OCI-LY7 (cell line): ENCODE measurements at regions of chr7 and their contacts with region 1.

Region 1: DNA sequence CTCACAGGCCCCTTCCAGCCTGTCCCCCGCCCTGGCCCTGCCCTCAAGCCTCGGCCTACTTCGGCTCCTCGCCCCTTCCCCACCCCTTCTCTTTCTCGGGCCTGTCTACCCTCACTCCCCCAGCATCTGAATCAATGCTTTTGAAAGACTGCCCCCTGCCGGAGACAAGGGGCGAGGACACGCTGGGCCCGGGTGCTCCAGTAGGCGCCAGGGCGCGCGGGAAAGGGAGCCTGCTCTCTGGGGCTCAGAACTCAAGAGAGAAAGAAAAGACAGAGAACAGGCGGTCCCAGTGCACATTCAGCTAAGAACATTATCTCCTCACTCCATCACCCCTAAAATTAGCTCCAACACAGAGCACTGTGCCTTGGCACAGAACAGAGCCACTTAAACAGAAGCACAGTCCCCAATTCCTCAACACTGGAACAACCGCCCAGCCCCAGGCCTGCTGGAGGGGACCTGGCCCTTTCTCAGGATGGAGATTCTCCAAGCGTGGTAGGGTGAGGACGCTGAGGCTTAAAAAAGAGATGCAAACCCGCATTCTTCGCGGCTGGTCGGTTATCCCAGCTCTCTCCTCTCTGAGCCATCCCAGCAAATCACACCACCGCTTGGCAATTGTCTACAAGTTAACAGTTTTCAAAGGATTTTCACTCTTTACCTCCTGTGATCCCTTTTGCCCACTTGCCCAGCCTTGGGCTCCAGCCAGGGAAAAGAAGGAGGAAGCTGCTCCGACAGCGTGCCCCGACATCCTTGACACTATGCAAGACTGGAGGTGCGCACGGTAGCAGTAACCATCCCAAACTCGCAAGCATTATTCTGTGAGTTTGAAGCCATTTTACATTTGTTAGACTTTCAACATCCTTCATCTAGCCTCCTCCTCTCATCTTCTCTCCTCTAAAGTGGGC is 2.1 kb downstream of the GIGYF1 start:
- DNase-seq: peak; percentile 84
- H3K4me3 ChIP-seq: peak overlapping the region; percentile 95
- H3K27ac ChIP-seq: peak overlapping the region; percentile 42
- H3K4me1 ChIP-seq: peaks cover 42% of the 10 kb centered on the region
- CTCF ChIP-seq: peak; percentile 93

Region 2: GRCh38 chr7:100102950-100103840 is 588.7 kb before region 1 on chr7:
- CTCF ChIA-PET with region 1: no interaction called
- POLR2A ChIA-PET with region 1: no interaction called
- intact Hi-C with region 1: no loop called
- DNase-seq: no peak
- H3K4me3 ChIP-seq: peak overlapping the region; percentile 90
- H3K27ac ChIP-seq: peak overlapping the region; percentile 92
- H3K4me1 ChIP-seq: peaks cover 25% of the 10 kb centered on the region
- CTCF ChIP-seq: no peak

Region 3: DNA sequence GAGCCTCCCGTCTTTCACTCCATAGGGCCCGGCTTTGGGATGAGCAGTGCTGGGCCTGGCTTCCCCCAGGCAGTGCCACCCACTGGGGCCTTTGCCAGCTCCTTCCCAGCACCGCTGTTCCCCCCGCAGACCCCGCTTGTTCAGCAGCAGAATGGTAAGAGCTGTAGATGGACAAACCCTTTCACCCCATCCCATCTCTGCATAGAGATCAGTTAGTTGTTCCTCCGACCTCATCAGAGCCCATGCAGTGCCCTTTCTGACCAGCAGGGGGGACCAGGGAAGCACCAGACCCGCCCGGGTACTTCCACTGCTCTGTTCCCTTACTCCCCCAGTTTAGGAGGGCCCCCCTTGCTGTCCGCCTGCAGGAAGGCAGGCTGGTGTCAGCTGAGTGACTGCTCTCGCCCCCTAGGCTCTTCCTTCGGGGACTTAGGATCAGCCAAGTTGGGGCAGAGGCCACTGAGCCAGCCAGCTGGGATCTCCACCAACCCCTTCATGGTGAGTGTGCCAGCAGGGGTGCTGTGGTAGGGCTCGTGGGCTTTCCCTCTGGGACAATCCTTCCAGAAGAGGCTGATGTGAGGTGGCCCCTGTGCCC is 128.0 kb before region 1 on chr7:
- CTCF ChIA-PET with region 1: no interaction called
- POLR2A ChIA-PET with region 1: no interaction called
- intact Hi-C with region 1: loop called (anchors 1 kb)
- DNase-seq: peak; percentile 75
- H3K4me3 ChIP-seq: no peak overlapping the region
- H3K27ac ChIP-seq: no peak overlapping the region
- H3K4me1 ChIP-seq: peaks cover 27% of the 10 kb centered on the region
- CTCF ChIP-seq: peak; percentile 93

Region 4: GRCh38 chr7:100611974-100612729 is 79.8 kb before region 1 on chr7 and contains the start of gene MOSPD3:
- CTCF ChIA-PET with region 1: interaction called, 4 read pairs
- POLR2A ChIA-PET with region 1: interaction called, 5 read pairs
- intact Hi-C with region 1: loop called (anchors 1 kb)
- DNase-seq: peak; percentile 100
- H3K4me3 ChIP-seq: peak within 1 kb of the TSS; percentile 69
- H3K27ac ChIP-seq: peak within 1 kb of the TSS; percentile 76
- H3K4me1 ChIP-seq: peaks cover 9% of the 10 kb centered on the region
- CTCF ChIP-seq: no peak
- total RNA-seq, gene MOSPD3: 7.1 and 12.0 TPM in 2 replicates

Region 5: DNA sequence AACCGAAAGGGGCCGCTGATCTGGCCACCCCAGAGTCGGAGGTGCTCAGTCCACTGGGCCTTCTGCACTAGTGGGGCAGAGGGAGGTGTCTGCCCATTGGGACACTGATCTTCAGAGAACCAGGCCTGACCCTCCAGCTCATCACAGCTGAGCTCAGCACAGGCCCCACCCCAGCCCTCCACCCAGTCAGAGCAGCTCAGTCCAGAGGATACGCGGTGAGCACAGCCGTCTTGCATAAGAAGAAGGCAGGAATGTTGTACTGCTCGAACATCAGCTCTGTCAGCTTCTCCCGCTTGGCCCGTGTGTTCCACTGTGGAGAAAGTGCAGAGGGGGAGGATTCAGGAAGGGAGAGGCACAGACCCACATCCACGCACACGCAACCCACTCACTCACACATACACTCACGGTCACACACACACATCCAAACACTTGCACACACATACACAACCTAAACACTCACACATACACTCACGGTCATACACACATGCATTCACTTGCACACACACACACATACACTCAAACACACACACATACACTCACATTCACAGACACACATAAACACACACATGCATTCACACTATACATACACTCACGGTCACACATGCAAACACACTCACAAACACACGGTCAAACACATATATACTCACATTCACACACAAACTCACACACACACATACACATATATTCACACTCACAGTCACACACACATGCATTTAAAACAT is 41.9 kb before region 1 on chr7:
- CTCF ChIA-PET with region 1: no interaction called
- POLR2A ChIA-PET with region 1: no interaction called
- intact Hi-C with region 1: no loop called
- DNase-seq: no peak
- H3K4me3 ChIP-seq: no peak overlapping the region
- H3K27ac ChIP-seq: no peak overlapping the region
- H3K4me1 ChIP-seq: no peaks in the 10 kb centered on the region
- CTCF ChIP-seq: no peak

Region 6: DNA sequence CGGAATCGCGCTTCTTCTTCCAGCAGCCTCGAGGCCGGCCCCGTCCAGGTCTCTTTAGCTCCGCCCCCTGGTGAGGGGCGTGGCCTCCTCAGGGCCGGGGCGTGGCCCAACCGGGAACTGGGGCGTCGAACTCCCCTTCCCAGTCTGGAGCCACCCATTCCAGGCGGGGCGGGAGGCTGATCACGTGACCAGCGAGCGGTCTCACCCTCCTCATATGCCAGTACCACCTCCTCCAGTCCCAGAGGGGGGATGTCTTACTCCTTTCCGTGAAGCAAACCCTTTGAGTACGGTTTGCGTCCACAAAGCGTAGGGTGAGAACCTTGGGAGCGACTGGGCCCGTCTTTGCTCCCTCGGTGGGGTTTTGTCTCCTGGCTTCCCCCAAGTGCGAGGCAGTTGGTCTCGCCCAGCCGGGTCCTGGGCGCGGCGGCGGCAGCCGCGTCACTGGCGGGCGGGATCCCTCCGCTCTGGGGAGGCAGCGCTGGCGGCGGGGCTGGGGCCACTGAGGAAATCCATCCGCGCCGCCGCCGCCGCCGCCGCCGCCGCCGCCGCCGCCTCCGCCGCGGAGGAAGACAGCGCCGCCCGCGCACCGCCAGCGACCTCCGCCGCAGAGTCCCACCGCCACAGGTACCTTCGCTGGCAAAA is 18.5 kb before region 1 on chr7 and contains the start of gene GNB2:
- CTCF ChIA-PET with region 1: interaction called, 4 read pairs
- POLR2A ChIA-PET with region 1: no interaction called
- intact Hi-C with region 1: loop called (anchors 1 kb)
- DNase-seq: peak; percentile 98
- H3K4me3 ChIP-seq: peak within 1 kb of the TSS; percentile 99
- H3K27ac ChIP-seq: peak within 1 kb of the TSS; percentile 64
- H3K4me1 ChIP-seq: peaks cover 9% of the 10 kb centered on the region
- CTCF ChIP-seq: no peak
- total RNA-seq, gene GNB2: 59.4 and 80.4 TPM in 2 replicates

Region 7: GRCh38 chr7:100745184-100745583 is 53.3 kb after region 1 on chr7:
- CTCF ChIA-PET with region 1: no interaction called
- POLR2A ChIA-PET with region 1: no interaction called
- intact Hi-C with region 1: no loop called
- DNase-seq: no peak
- H3K4me3 ChIP-seq: no peak overlapping the region
- H3K27ac ChIP-seq: no peak overlapping the region
- H3K4me1 ChIP-seq: no peaks in the 10 kb centered on the region
- CTCF ChIP-seq: no peak